ENCODE measurements at regions of chr22 and their contacts with region 1.

Region 1: GRCh38 chr22:33774781-33775180 is 145.5 kb downstream of the LARGE1 start:
- DNase-seq: no peak
- ATAC-seq: no peak
- H3K4me3 ChIP-seq: no peak overlapping the region
- H3K27ac ChIP-seq: no peak overlapping the region
- H3K4me1 ChIP-seq: peaks cover 12% of the 10 kb centered on the region
- H3K27me3 ChIP-seq: no peaks in the 10 kb centered on the region

Region 2: GRCh38 chr22:33853200-33854097 is 78.7 kb after region 1 on chr22:
- intact Hi-C with region 1: no loop called
- DNase-seq: peak; percentile 69 to 89 (median 85)
- ATAC-seq: peak; percentile 93 to 95
- H3K4me3 ChIP-seq: peak overlapping the region; percentile 87
- H3K27ac ChIP-seq: peak overlapping the region; percentile 64
- H3K4me1 ChIP-seq: peaks cover 13% of the 10 kb centered on the region
- H3K27me3 ChIP-seq: no peaks in the 10 kb centered on the region

Region 3: GRCh38 chr22:34111210-34111824 is 336.5 kb after region 1 on chr22:
- intact Hi-C with region 1: loop called in 1 of 4 experiments (anchors 10 kb)
- DNase-seq: peak in 1 of 3 donors; percentile 43
- ATAC-seq: peak; percentile 47 to 66
- H3K4me3 ChIP-seq: no peak overlapping the region
- H3K27ac ChIP-seq: no peak overlapping the region
- H3K4me1 ChIP-seq: no peaks in the 10 kb centered on the region
- H3K27me3 ChIP-seq: no peaks in the 10 kb centered on the region